GM12878 (cell line): ENCODE measurements at regions of chr13 and their contacts with region 1.

Region 1: DNA sequence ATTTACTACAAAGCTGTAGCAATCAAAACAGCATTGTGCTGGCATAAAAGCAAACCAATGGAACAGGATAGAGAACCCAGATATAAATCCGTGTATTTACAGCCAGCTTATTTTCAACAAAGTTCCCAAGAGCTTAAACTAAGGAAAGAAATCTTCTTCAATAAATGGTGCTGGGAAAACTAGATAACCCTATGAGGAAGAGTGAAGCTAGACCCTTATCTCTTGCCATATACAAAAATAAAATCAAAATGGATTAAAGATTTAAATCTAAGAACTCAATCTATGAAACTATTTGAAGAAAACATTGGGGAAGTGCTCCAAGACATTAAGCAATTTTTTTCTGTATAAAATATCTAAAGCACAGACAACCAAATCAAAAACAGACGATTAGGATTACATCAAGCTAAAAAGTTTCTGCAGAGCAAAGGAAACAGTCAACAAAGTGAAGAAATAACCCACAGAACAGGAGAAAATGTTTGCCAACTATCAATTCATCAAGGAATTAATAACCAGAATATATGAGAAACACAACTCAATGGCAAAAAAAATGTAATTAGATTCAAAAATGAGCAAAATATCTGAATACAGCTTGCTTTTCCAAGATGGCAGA is 480.7 kb downstream of the LMO7 start:
- DNase-seq: no peak
- ATAC-seq: no peak
- H3K4me3 ChIP-seq: no peak overlapping the region
- H3K27ac ChIP-seq: no peak overlapping the region
- H3K4me1 ChIP-seq: no peaks in the 10 kb centered on the region
- H3K27me3 ChIP-seq: no peaks in the 10 kb centered on the region
- CTCF ChIP-seq: no peak
- EP300 ChIP-seq: no peak
- POLR2A ChIP-seq: no peak
- RAD21 ChIP-seq: no peak

Region 2: GRCh38 chr13:74675182-74675581 is 1441.7 kb before region 1 on chr13:
- CTCF ChIA-PET with region 1: no interaction called
- POLR2A ChIA-PET with region 1: no interaction called
- RAD21 ChIA-PET with region 1: no interaction called
- SMC1A ChIA-PET with region 1: no interaction called
- in situ Hi-C with region 1: no loop called
- intact Hi-C with region 1: no loop called
- DNase-seq: no peak
- ATAC-seq: no peak
- H3K4me3 ChIP-seq: no peak overlapping the region
- H3K27ac ChIP-seq: no peak overlapping the region
- H3K4me1 ChIP-seq: no peaks in the 10 kb centered on the region
- H3K27me3 ChIP-seq: no peaks in the 10 kb centered on the region
- CTCF ChIP-seq: no peak
- EP300 ChIP-seq: no peak
- POLR2A ChIP-seq: no peak
- RAD21 ChIP-seq: no peak

Region 3: GRCh38 chr13:76266561-76266960 is 149.7 kb after region 1 on chr13:
- CTCF ChIA-PET with region 1: no interaction called
- POLR2A ChIA-PET with region 1: interaction called, 10 read pairs
- RAD21 ChIA-PET with region 1: no interaction called
- SMC1A ChIA-PET with region 1: no interaction called
- in situ Hi-C with region 1: no loop called
- intact Hi-C with region 1: no loop called
- DNase-seq: no peak
- ATAC-seq: no peak
- H3K4me3 ChIP-seq: no peak overlapping the region
- H3K27ac ChIP-seq: no peak overlapping the region
- H3K4me1 ChIP-seq: no peaks in the 10 kb centered on the region
- H3K27me3 ChIP-seq: no peaks in the 10 kb centered on the region
- CTCF ChIP-seq: no peak
- EP300 ChIP-seq: no peak
- POLR2A ChIP-seq: no peak
- RAD21 ChIP-seq: no peak